HEK293 (cell line): ENCODE measurements at regions of chr1 and their contacts with region 1.

Region 1: GRCh38 chr1:95072532-95073419 is at the start of gene ALG14:
- H3K4me3 ChIP-seq: peak within 1 kb of the TSS; percentile 91
- H3K27ac ChIP-seq: peak within 1 kb of the TSS; percentile 61
- H3K4me1 ChIP-seq: peaks cover 3% of the 10 kb centered on the region; the same call in 1 of the 2 replicates
- CTCF ChIP-seq: no peak

Region 2: GRCh38 chr1:94843430-94843829 is 229.3 kb before region 1 on chr1:
- CTCF ChIA-PET with region 1: no interaction called
- POLR2A ChIA-PET with region 1: no interaction called
- H3K4me3 ChIP-seq: no peak overlapping the region
- H3K27ac ChIP-seq: no peak overlapping the region
- H3K4me1 ChIP-seq: no peaks in the 10 kb centered on the region
- CTCF ChIP-seq: no peak

Region 3: GRCh38 chr1:95116580-95117206 is 43.9 kb after region 1 on chr1:
- CTCF ChIA-PET with region 1: interaction called, 10 read pairs
- POLR2A ChIA-PET with region 1: interaction called, 12 read pairs
- H3K4me3 ChIP-seq: peak overlapping the region; percentile 73
- H3K27ac ChIP-seq: peak overlapping the region; percentile 84; the same call in 1 of the 2 replicates
- H3K4me1 ChIP-seq: no peaks in the 10 kb centered on the region
- CTCF ChIP-seq: peak; percentile 88

Region 4: DNA sequence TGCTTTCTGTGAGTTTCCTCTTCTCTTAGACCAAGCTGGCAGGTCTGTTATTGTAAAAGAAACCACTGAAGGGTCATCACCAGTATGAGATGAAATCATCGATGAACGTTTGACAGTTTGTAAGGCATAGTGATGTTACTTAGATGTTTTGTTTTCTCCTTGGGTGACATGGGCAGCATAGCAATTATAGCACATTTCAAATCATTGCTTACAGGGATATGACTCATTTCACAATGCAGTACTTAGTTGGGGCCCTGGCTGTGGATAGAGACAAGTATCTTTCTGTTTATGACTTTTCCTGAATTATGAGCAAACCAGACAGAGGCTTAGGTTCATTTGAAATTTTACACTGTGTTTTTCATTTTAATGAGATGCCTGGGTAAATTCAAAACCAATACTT is 474.2 kb after region 1 on chr1:
- CTCF ChIA-PET with region 1: no interaction called
- POLR2A ChIA-PET with region 1: no interaction called
- H3K4me3 ChIP-seq: no peak overlapping the region
- H3K27ac ChIP-seq: no peak overlapping the region
- H3K4me1 ChIP-seq: no peaks in the 10 kb centered on the region
- CTCF ChIP-seq: no peak